Motor neuron (in vitro differentiated cells): ENCODE measurements at regions of chr13 and their contacts with region 1.

Region 1: GRCh38 chr13:95447814-95448213 is 104.7 kb upstream of the CLDN10 start:
- ATAC-seq: no peak
- H3K4me3 ChIP-seq: no peak overlapping the region
- H3K27ac ChIP-seq: no peak overlapping the region
- H3K4me1 ChIP-seq: no peaks in the 10 kb centered on the region

Region 2: GRCh38 chr13:94630858-94631257 is 817.0 kb before region 1 on chr13:
- in situ Hi-C with region 1: no loop called
- ATAC-seq: no peak
- H3K4me3 ChIP-seq: no peak overlapping the region
- H3K27ac ChIP-seq: no peak overlapping the region
- H3K4me1 ChIP-seq: no peaks in the 10 kb centered on the region

Region 3: GRCh38 chr13:95536632-95537241 is 88.9 kb after region 1 on chr13:
- in situ Hi-C with region 1: loop called in 1 of 9 experiments (anchors 25 kb)
- ATAC-seq: peak in 3 of 8 experiments; percentile 66 to 90 (median 78)
- H3K4me3 ChIP-seq: no peak overlapping the region
- H3K27ac ChIP-seq: no peak overlapping the region
- H3K4me1 ChIP-seq: peaks cover 4 to 7% of the 10 kb centered on the region in 2 donors